ENCODE measurements at regions of chr22 and their contacts with region 1.

Region 1: GRCh38 chr22:38051900-38052862 is 5.0 kb upstream of the PICK1 start:
- DNase-seq: peak; percentile 82
- H3K4me3 Mint-ChIP-seq: no peak overlapping the region
- H3K27ac Mint-ChIP-seq: no peak overlapping the region
- H3K4me1 Mint-ChIP-seq: peaks cover 4% of the 10 kb centered on the region
- H3K27me3 Mint-ChIP-seq: peaks cover 2% of the 10 kb centered on the region

Region 2: DNA sequence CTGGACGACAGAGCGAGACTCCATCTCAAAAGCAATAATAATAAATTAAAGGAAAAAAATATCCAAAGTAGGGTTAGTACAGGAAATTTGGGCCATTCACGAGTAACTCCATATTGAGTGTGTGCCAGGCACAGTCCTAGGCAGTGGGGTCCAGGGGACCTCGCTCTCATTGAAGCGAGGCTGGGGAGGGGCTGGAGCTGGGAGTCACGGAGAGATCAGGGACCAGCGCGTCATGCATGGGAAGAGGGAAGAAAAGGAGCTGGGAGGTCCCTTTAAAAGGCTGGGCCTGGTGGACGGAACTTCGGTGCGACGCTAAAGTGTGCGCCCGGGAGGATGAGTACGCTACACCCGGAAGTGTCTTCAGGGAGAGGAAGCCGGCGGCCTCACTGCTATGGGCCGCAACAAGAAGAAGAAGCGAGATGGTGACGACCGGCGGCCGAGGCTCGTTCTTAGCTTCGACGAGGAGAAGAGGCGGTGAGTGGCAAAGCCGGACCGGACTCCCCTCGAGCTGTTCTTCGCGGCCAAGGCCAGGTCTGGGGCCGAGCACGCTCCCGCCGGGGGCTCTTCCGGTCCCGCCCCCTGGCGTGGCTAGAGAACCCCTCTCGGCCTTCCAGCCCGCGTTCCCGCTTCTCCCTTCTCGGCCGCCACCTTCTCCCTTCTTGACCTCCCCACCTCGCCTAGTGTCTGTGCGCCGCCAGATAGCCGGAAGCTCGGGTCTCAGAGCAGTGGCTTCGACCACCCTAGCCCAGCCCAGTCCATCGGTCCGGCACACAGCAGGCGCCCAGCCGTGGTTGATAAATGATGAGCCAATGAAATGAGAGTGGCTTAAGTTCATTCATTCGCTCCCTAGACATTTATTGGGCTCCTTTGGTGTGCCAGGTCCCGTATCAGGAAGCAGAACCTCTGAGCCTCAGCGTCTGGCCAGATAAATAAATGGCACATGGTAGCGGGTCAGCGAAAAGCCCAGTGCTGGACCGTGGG is 365.9 kb before region 1 on chr22 and contains the start of gene NOL12:
- CTCF ChIA-PET with region 1: no interaction called
- POLR2A ChIA-PET with region 1: no interaction called
- intact Hi-C with region 1: no loop called
- DNase-seq: peak; percentile 86
- H3K4me3 Mint-ChIP-seq: peak within 1 kb of the TSS; percentile 98
- H3K27ac Mint-ChIP-seq: peak within 1 kb of the TSS; percentile 94
- H3K4me1 Mint-ChIP-seq: peaks cover 26% of the 10 kb centered on the region
- H3K27me3 Mint-ChIP-seq: no peaks in the 10 kb centered on the region
- total RNA-seq, gene NOL12: 32.5 to 33.3 TPM

Region 3: DNA sequence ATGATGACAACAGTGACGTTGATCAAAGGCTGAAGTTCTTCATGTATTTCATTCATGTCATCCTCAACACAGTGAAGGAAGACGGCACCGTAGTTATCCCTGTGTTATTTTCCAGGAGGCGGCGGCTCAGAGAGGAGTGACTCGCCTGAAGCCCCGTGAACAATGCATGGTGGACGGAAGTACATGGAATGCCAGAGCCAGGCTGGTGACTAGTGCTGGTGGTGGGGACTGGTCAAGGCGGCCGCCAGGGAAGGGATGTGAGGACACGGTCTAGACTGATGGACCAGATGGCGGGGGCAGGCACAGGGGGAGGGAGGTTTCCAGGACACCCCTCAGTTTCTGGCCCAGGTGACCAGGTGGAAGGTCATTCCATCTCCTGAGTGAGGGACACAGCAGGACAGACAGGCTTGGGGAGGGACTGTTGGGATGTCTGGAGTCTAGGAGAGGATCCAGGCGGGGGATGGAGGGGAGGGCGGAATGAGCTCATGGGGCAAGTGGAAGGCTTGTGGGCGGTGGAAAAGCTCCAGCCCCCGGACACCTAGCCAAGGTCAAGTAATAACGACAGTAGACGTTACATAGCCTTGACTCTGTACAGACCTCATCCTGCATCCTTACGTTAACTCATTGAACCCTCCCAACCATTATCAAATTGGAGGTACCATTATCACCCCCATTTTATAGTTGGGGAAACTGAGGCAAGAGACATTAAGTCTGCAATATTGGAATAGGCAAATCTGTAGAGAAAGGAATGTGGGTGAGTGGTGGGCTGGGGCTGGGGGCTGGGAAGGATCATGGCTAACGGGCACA is 11.0 kb before region 1 on chr22:
- CTCF ChIA-PET with region 1: interaction called, 15 read pairs
- POLR2A ChIA-PET with region 1: no interaction called
- intact Hi-C with region 1: no loop called
- DNase-seq: no peak
- H3K4me3 Mint-ChIP-seq: no peak overlapping the region
- H3K27ac Mint-ChIP-seq: no peak overlapping the region
- H3K4me1 Mint-ChIP-seq: no peaks in the 10 kb centered on the region
- H3K27me3 Mint-ChIP-seq: no peaks in the 10 kb centered on the region

Region 4: GRCh38 chr22:38104084-38104483 is 51.9 kb after region 1 on chr22:
- CTCF ChIA-PET with region 1: interaction called, 8 read pairs
- POLR2A ChIA-PET with region 1: no interaction called
- intact Hi-C with region 1: loop called (anchors 10 kb)
- DNase-seq: no peak
- H3K4me3 Mint-ChIP-seq: no peak overlapping the region
- H3K27ac Mint-ChIP-seq: no peak overlapping the region
- H3K4me1 Mint-ChIP-seq: no peaks in the 10 kb centered on the region
- H3K27me3 Mint-ChIP-seq: no peaks in the 10 kb centered on the region

Region 5: GRCh38 chr22:38230108-38230825 is 178.1 kb after region 1 on chr22:
- CTCF ChIA-PET with region 1: interaction called, 37 read pairs
- POLR2A ChIA-PET with region 1: no interaction called
- intact Hi-C with region 1: no loop called
- DNase-seq: peak; percentile 66
- H3K4me3 Mint-ChIP-seq: no peak overlapping the region
- H3K27ac Mint-ChIP-seq: no peak overlapping the region
- H3K4me1 Mint-ChIP-seq: peaks cover 3% of the 10 kb centered on the region
- H3K27me3 Mint-ChIP-seq: no peaks in the 10 kb centered on the region

Region 6: GRCh38 chr22:38569972-38570778 is 518.0 kb after region 1 on chr22 and contains the start of gene DMC1:
- CTCF ChIA-PET with region 1: interaction called, 35 read pairs
- POLR2A ChIA-PET with region 1: no interaction called
- intact Hi-C with region 1: loop called (anchors 5 kb)
- DNase-seq: peak; percentile 100
- H3K4me3 Mint-ChIP-seq: peak within 1 kb of the TSS; percentile 84
- H3K27ac Mint-ChIP-seq: peak within 1 kb of the TSS; percentile 90
- H3K4me1 Mint-ChIP-seq: peaks cover 12% of the 10 kb centered on the region
- H3K27me3 Mint-ChIP-seq: no peaks in the 10 kb centered on the region
- total RNA-seq, gene DMC1: 15.8 to 20.1 TPM

Measured in activated CD4-positive, alpha-beta memory T cell treated with anti-CD3 and anti-CD28 coated beads for 36 hours (primary cell).